Activated B cell treated with CpG ODN at 0.5 μM for 24 hours (primary cell): ENCODE measurements at regions of chr2 and their contacts with region 1.

Region 1: GRCh38 chr2:75627895-75628504 is 18.6 kb upstream of the MRPL19 start:
- DNase-seq: peak; percentile 38
- ATAC-seq: peak; percentile 75
- H3K4me3 Mint-ChIP-seq: no peak overlapping the region
- H3K27ac Mint-ChIP-seq: no peak overlapping the region
- H3K4me1 Mint-ChIP-seq: peaks cover 2% of the 10 kb centered on the region
- H3K27me3 Mint-ChIP-seq: peaks cover 30% of the 10 kb centered on the region
- CTCF ChIP-seq: peak; percentile 91

Region 2: DNA sequence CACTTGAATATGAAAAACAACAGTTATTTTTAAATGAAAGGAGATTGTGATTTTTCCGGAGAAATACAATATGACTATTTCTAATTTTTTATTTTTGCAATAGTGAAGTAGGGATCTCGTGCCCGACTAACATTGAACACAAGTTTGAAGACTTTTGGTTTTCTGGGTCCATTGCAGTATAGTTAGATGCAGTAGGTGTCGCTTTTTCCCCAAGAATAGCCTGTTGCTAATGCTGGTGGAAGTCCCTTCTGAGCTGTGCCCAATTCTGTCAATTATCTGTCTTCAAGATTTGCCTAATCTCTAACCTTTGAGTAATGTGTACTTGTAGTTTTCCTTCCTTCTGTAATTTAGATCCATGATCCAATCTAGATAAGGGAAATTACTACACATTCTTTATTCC is 937.4 kb before region 1 on chr2:
- CTCF ChIA-PET with region 1: interaction called, 3 read pairs
- POLR2A ChIA-PET with region 1: no interaction called
- intact Hi-C with region 1: loop called (anchors 1 kb)
- DNase-seq: no peak
- ATAC-seq: peak; percentile 50
- H3K4me3 Mint-ChIP-seq: no peak overlapping the region
- H3K27ac Mint-ChIP-seq: no peak overlapping the region
- H3K4me1 Mint-ChIP-seq: no peaks in the 10 kb centered on the region
- H3K27me3 Mint-ChIP-seq: peaks cover 6% of the 10 kb centered on the region
- CTCF ChIP-seq: peak; percentile 5

Region 3: GRCh38 chr2:74919827-74920226 is 708.2 kb before region 1 on chr2:
- CTCF ChIA-PET with region 1: interaction called, 13 read pairs
- POLR2A ChIA-PET with region 1: no interaction called
- intact Hi-C with region 1: loop called (anchors 1 kb)
- DNase-seq: peak; percentile 72
- ATAC-seq: peak; percentile 88
- H3K4me3 Mint-ChIP-seq: peak overlapping the region; percentile 42
- H3K27ac Mint-ChIP-seq: no peak overlapping the region
- H3K4me1 Mint-ChIP-seq: peaks cover 14% of the 10 kb centered on the region
- H3K27me3 Mint-ChIP-seq: peaks cover 10% of the 10 kb centered on the region
- CTCF ChIP-seq: peak; percentile 57

Region 4: DNA sequence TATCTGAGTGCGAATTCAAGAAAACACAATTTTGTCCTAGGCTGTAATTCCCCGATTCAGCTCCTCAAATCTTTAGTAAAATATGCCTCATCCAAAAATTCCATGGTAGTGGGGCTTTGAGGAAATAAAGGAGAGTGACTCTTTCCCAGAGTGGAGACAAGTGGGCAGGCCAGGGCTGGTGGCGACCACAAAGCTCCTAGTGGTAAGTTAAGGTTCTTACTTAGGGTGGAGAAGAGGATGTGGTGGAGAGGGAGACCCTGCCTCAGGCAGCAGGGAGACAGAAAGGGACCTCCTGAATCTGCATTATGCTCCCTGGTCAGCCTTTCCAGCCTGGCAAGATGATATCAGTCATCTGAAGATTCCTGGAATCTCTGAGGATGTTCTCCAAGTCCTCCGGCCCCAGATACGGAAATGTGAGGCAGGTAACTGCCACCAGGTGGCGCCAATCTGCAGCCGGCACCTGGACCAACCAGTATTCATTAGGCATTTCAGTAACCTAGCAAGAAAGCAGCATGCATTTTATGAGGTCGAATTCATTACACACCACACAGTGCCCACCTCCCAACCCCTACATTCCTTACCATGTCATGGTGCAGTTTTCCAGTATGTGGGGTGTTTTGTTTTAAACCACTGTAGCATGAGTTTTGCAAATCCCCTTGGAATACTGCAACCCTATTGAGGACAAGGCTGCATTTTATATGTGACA is 563.2 kb before region 1 on chr2:
- CTCF ChIA-PET with region 1: interaction called, 5 read pairs
- POLR2A ChIA-PET with region 1: no interaction called
- intact Hi-C with region 1: loop called (anchors 5 kb)
- DNase-seq: peak; percentile 42
- ATAC-seq: no peak
- H3K4me3 Mint-ChIP-seq: no peak overlapping the region
- H3K27ac Mint-ChIP-seq: no peak overlapping the region
- H3K4me1 Mint-ChIP-seq: no peaks in the 10 kb centered on the region
- H3K27me3 Mint-ChIP-seq: no peaks in the 10 kb centered on the region
- CTCF ChIP-seq: peak; percentile 56

Region 5: GRCh38 chr2:75199428-75200011 is 428.5 kb before region 1 on chr2 and contains the start of gene TACR1:
- CTCF ChIA-PET with region 1: no interaction called
- POLR2A ChIA-PET with region 1: no interaction called
- intact Hi-C with region 1: loop called (anchors 5 kb)
- DNase-seq: peak; percentile 55
- ATAC-seq: peak; percentile 79
- H3K4me3 Mint-ChIP-seq: peak within 1 kb of the TSS; percentile 81
- H3K27ac Mint-ChIP-seq: no peak within 1 kb of the TSS
- H3K4me1 Mint-ChIP-seq: peaks cover 20% of the 10 kb centered on the region
- H3K27me3 Mint-ChIP-seq: peaks cover 61% of the 10 kb centered on the region
- CTCF ChIP-seq: peak; percentile 43
- total RNA-seq, gene TACR1: not detected in 2 replicates

Region 6: GRCh38 chr2:75640621-75641121 is 12.7 kb after region 1 on chr2:
- CTCF ChIA-PET with region 1: interaction called, 22 read pairs
- POLR2A ChIA-PET with region 1: no interaction called
- intact Hi-C with region 1: no loop called
- DNase-seq: peak; percentile 23
- ATAC-seq: peak; percentile 94
- H3K4me3 Mint-ChIP-seq: no peak overlapping the region
- H3K27ac Mint-ChIP-seq: no peak overlapping the region
- H3K4me1 Mint-ChIP-seq: no peaks in the 10 kb centered on the region
- H3K27me3 Mint-ChIP-seq: peaks cover 16% of the 10 kb centered on the region
- CTCF ChIP-seq: peak; percentile 79